ENCODE measurements at regions of chr1 and their contacts with region 1.

Region 1: DNA sequence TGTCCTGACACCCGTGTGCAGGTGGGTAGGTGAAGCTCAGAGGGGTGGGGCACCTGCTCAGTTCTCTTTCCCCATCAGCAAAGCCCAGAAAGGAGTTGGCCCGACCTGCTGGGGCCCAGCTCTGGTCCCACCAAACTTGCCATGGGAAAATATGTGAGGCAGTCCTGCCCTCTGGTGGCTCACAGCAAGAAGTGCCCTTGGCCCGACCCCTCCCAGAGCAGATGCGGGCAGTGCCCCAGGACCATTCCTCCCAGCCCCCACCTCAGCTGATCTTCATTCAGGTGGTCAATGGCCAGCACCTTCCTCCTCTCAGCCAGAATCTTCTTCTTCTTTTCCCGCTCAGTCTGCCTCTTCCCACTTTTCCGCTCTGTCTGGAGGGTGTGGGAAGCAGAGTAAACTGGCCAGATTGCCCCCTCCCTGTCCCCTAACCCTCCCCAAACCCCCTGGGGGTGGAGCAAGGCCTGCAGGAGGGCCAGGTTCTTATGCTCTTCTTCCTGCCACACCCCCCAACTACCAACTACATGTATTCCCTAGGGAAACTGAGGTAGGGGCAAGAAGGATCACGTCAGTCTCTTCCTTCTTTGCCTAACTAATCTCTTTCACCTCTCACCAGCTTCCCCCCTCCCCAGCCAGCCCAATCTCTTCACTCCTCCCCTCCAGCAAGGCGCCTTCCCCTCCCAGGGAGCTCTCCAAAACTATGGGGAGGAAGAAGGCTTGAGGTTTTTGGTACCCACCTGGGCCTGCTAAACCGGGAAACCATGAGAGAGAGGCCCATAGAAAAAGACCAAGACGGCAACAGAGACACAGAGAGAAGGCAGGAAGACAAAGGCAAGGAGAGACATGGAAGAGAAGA is 15.6 kb downstream of the TNNT2 start:
- DNase-seq: no peak
- H3K4me3 ChIP-seq: no peak overlapping the region
- CTCF ChIP-seq: peak; percentile 88

Region 2: GRCh38 chr1:201028461-201028889 is 333.4 kb before region 1 on chr1:
- CTCF ChIA-PET with region 1: no interaction called
- POLR2A ChIA-PET with region 1: no interaction called
- DNase-seq: no peak
- H3K4me3 ChIP-seq: no peak overlapping the region
- CTCF ChIP-seq: no peak

Region 3: DNA sequence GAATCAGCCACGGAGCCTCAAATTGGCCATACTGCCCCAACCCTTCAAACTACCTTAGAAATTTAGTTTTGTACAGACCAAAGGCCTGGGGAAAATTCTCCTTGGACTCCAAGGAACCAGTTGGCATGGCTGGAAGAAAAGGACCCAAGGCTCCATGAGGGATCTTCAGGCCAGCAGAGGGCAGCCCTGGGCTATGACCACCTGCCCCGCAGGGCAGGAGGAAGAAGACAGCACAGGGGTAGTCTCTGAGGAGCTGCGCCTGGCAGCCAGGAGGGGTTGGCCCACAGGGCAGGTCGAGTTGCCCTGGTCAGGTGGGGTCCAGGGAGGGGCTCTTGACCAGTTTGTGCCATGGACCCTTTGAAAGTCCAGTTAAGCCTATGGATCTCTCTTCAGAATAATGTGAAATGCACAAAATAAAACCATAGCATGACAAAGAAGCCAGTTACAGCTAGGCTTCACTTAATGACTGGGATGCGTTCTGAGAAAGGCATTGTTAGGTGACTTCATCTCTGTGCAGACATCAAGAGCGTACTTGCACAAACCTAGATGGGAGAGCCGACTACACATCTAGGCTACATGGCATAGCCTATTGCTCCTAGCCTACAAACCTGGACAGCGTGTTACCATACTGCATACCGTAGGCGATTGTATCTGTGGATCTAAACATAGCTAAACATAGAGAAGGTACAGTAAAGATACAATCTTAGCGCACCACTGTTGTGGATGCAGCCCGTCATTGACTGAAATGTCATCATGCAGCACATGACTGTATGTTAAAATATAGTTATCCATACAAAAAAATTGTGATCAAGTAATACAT is 275.8 kb before region 1 on chr1:
- CTCF ChIA-PET with region 1: interaction called, 13 read pairs
- POLR2A ChIA-PET with region 1: no interaction called
- DNase-seq: no peak
- H3K4me3 ChIP-seq: no peak overlapping the region
- CTCF ChIP-seq: peak; percentile 76

Region 4: GRCh38 chr1:201282931-201283829 is 78.7 kb before region 1 on chr1 and contains the start of gene PKP1:
- CTCF ChIA-PET with region 1: interaction called, 15 read pairs
- POLR2A ChIA-PET with region 1: no interaction called
- DNase-seq: no peak
- H3K4me3 ChIP-seq: peak within 1 kb of the TSS; percentile 35
- CTCF ChIP-seq: no peak

Region 5: GRCh38 chr1:201334325-201335173 is 27.3 kb before region 1 on chr1:
- CTCF ChIA-PET with region 1: interaction called, 10 read pairs
- POLR2A ChIA-PET with region 1: no interaction called
- DNase-seq: no peak
- H3K4me3 ChIP-seq: no peak overlapping the region
- CTCF ChIP-seq: no peak

Region 6: GRCh38 chr1:201385299-201385891 is 23.5 kb after region 1 on chr1:
- CTCF ChIA-PET with region 1: interaction called, 25 read pairs
- POLR2A ChIA-PET with region 1: interaction called, 3 read pairs
- DNase-seq: no peak
- H3K4me3 ChIP-seq: no peak overlapping the region
- CTCF ChIP-seq: peak; percentile 86

Region 7: DNA sequence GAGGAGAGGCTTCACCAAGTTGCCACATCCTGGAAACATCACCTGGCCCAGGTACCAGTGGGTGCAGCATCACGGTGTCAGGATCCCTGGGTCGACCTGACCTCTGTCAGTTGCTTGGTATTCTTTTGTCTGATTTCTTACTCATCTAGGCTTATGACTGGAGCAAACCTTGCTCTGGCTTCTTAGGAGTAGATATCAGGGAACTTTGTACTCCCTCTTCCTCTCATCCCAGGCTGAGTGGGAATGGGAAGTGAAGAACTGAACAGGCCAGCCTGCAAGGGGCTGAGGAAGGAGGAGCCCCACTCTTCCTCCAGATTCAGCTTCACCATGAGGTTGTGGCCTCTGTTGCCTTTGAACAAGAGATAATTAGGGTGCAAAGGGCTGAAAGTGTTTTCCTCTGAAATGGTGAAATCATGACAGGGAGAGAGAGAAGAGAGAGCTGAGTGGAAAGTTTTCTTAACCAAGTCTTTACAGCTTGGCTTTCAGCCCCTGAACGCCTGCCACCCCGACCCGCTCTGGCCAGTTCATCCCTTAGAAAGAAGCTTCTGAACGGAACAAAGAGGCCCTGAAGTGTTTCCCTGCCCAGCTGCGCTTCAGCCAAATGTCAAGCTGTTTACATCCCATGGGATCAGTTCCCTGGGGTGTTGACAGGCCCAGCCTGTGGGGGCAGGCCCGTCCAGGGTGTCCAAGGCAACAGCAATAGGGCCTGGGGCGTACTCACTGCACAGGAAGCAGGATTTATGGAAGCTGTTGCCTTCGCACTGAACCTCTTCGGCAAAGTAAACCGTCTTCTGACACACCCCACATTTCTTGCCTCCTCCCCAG is 133.8 kb after region 1 on chr1:
- CTCF ChIA-PET with region 1: no interaction called
- POLR2A ChIA-PET with region 1: no interaction called
- DNase-seq: no peak
- H3K4me3 ChIP-seq: no peak overlapping the region
- CTCF ChIP-seq: no peak